GM12878 (cell line): ENCODE measurements at regions of chr12 and their contacts with region 1.

Region 1: DNA sequence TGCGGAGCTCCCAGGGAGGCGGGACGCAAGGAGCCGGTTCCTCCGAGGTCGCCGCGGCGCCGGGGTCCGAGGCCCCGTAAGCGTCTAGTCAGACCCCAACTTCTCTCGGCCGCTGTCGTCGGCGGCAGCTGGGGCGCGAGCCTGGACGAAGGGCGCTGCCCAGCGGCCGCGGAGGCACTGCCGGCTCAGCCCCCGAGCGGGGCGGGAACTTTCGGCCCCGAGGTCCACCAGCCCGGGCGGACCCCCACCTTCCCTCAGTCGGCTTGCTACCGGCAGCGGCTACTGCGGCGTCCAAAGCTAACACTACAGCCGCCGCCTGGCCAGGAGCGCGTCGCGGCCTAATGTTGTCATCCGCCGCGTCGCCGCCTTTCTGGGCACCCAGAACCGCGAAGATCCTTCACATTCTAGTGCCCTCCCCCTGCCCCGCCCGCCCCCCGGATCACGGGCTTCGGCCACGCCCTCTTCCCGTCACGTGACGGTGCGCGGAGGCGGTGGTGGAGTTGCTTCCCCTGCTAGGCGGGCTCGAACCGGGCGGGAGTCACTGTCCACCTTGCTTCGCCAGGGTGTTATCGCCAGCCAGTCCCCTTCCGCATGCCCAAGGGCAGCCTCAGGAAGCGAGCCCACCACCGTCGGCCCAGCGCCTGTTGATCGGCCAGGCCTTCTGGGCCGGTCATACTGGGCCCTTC is at the start of gene OSBPL8:
- DNase-seq: peak; percentile 71
- ATAC-seq: peak; percentile 85
- H3K4me3 ChIP-seq: peak within 1 kb of the TSS; percentile 98
- H3K27ac ChIP-seq: peak within 1 kb of the TSS; percentile 96
- H3K4me1 ChIP-seq: peaks cover 3% of the 10 kb centered on the region; the same call in 1 of the 2 replicates
- H3K27me3 ChIP-seq: no peaks in the 10 kb centered on the region
- CTCF ChIP-seq: peak; percentile 13 to 42 (median 13); a peak in 3 of 6 replicates
- EP300 ChIP-seq: 0 out of 4 replicates have a peak, but pooled peaks of 1 of the 2 experiments have one; percentile 25
- POLR2A ChIP-seq: peak; percentile 99
- RAD21 ChIP-seq: 0 out of 2 replicates have a peak, but pooled peaks have one; percentile 22
- polyA plus RNA-seq, gene OSBPL8: 10.4 to 13.7 TPM

Region 2: DNA sequence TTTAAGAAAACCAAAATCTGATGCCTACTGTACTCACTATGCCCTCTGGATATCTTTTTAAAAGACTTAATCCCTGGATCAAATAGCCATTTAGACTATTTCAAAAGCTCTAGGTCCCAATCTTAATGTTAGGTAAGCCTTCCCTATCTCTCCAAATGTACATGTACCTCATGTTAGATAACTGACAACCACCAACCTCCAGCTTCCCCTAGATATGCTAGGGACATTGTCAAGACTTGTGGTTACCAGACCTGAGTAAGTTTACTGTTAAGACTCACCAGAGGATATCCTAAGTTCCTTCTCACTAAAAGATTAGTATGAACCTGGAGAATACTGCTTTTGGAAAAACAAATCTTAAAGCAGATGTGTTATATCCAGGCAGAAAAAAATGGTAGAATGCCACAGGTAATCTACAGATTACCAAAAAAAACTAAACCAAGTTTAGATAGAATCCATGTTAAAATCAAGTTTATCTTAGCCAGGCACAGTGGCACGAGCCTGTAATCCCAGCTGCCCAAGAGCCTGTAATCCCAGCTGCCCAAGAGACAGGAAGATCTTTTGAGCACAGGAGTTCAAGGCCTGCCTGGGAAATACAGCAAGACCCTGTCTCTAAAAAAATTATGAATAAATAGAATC is 484.7 kb before region 1 on chr12:
- CTCF ChIA-PET with region 1: interaction called, 3 read pairs
- POLR2A ChIA-PET with region 1: no interaction called
- RAD21 ChIA-PET with region 1: no interaction called
- SMC1A ChIA-PET with region 1: no interaction called
- in situ Hi-C with region 1: loop called (anchors 5 kb)
- intact Hi-C with region 1: loop called (anchors 5 kb)
- DNase-seq: no peak
- ATAC-seq: peak; percentile 44
- H3K4me3 ChIP-seq: peak overlapping the region; percentile 13; the same call in 1 of the 2 replicates
- H3K27ac ChIP-seq: no peak overlapping the region
- H3K4me1 ChIP-seq: peaks cover 4% of the 10 kb centered on the region; the same call in 1 of the 2 replicates
- H3K27me3 ChIP-seq: no peaks in the 10 kb centered on the region
- CTCF ChIP-seq: no peak
- EP300 ChIP-seq: no peak
- POLR2A ChIP-seq: no peak
- RAD21 ChIP-seq: no peak

Region 3: GRCh38 chr12:76144245-76144549 is 415.3 kb before region 1 on chr12:
- CTCF ChIA-PET with region 1: no interaction called
- POLR2A ChIA-PET with region 1: no interaction called
- RAD21 ChIA-PET with region 1: no interaction called
- SMC1A ChIA-PET with region 1: no interaction called
- in situ Hi-C with region 1: no loop called
- intact Hi-C with region 1: no loop called
- DNase-seq: no peak
- ATAC-seq: peak; percentile 53
- H3K4me3 ChIP-seq: no peak overlapping the region
- H3K27ac ChIP-seq: no peak overlapping the region
- H3K4me1 ChIP-seq: peaks cover 20% of the 10 kb centered on the region
- H3K27me3 ChIP-seq: no peaks in the 10 kb centered on the region
- CTCF ChIP-seq: no peak
- EP300 ChIP-seq: no peak
- POLR2A ChIP-seq: no peak
- RAD21 ChIP-seq: no peak

Region 4: GRCh38 chr12:76348079-76348901 is 211.3 kb before region 1 on chr12 and contains the start of gene BBS10:
- CTCF ChIA-PET with region 1: interaction called, 5 read pairs
- POLR2A ChIA-PET with region 1: no interaction called
- RAD21 ChIA-PET with region 1: interaction called, 5 read pairs
- SMC1A ChIA-PET with region 1: interaction called, 5 read pairs
- in situ Hi-C with region 1: no loop called
- intact Hi-C with region 1: loop called (anchors 10 kb)
- DNase-seq: peak; percentile 70
- ATAC-seq: peak; percentile 99
- H3K4me3 ChIP-seq: peak within 1 kb of the TSS; percentile 84
- H3K27ac ChIP-seq: peak within 1 kb of the TSS; percentile 83
- H3K4me1 ChIP-seq: peaks cover 7% of the 10 kb centered on the region; the same call in 1 of the 2 replicates
- H3K27me3 ChIP-seq: no peaks in the 10 kb centered on the region
- CTCF ChIP-seq: peak in 2 of 3 experiments; percentile 22 to 39; a peak in 3 of 6 replicates
- EP300 ChIP-seq: no peak
- POLR2A ChIP-seq: peak; percentile 93
- RAD21 ChIP-seq: 0 out of 2 replicates have a peak, but pooled peaks have one; percentile 7
- polyA plus RNA-seq, gene BBS10: 1.2 to 1.5 TPM

Region 5: GRCh38 chr12:76470028-76470939 is 89.3 kb before region 1 on chr12:
- CTCF ChIA-PET with region 1: interaction called, 5 read pairs
- POLR2A ChIA-PET with region 1: interaction called, 3 read pairs
- RAD21 ChIA-PET with region 1: interaction called, 5 read pairs
- SMC1A ChIA-PET with region 1: interaction called, 4 read pairs
- in situ Hi-C with region 1: no loop called
- intact Hi-C with region 1: loop called (anchors 5 kb)
- DNase-seq: peak; percentile 25
- ATAC-seq: peak; percentile 96
- H3K4me3 ChIP-seq: no peak overlapping the region
- H3K27ac ChIP-seq: no peak overlapping the region
- H3K4me1 ChIP-seq: peaks cover 13% of the 10 kb centered on the region
- H3K27me3 ChIP-seq: no peaks in the 10 kb centered on the region
- CTCF ChIP-seq: no peak
- EP300 ChIP-seq: no peak
- POLR2A ChIP-seq: no peak
- RAD21 ChIP-seq: no peak

Region 6: DNA sequence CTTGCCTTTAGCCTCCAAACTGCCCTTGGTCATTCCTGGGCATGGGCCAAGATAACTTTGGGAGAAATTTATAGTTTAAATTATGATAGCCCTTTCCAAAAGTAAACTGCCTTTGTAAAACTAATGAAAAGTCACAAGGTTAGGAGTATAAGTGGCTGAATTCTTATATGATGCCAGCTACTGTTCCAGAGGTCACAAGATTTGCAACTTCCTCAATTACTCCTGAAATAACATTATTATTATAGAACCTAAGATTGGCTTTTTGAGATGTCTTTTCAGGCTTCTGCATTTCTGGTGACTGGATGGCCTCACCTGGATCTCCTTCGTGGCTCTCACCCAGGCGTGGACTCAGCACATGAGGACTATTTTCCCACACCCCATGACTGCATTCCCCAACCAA is 54.9 kb before region 1 on chr12:
- CTCF ChIA-PET with region 1: no interaction called
- POLR2A ChIA-PET with region 1: no interaction called
- RAD21 ChIA-PET with region 1: no interaction called
- SMC1A ChIA-PET with region 1: no interaction called
- in situ Hi-C with region 1: no loop called
- intact Hi-C with region 1: no loop called
- DNase-seq: no peak
- ATAC-seq: no peak
- H3K4me3 ChIP-seq: no peak overlapping the region
- H3K27ac ChIP-seq: no peak overlapping the region
- H3K4me1 ChIP-seq: no peaks in the 10 kb centered on the region
- H3K27me3 ChIP-seq: no peaks in the 10 kb centered on the region
- CTCF ChIP-seq: no peak
- EP300 ChIP-seq: no peak
- POLR2A ChIP-seq: no peak
- RAD21 ChIP-seq: no peak

Region 7: GRCh38 chr12:76529226-76529918 is 30.2 kb before region 1 on chr12:
- CTCF ChIA-PET with region 1: no interaction called
- POLR2A ChIA-PET with region 1: no interaction called
- RAD21 ChIA-PET with region 1: no interaction called
- SMC1A ChIA-PET with region 1: no interaction called
- in situ Hi-C with region 1: no loop called
- intact Hi-C with region 1: no loop called
- DNase-seq: no peak
- ATAC-seq: no peak; the same call in 2 of the 3 replicates
- H3K4me3 ChIP-seq: no peak overlapping the region
- H3K27ac ChIP-seq: no peak overlapping the region
- H3K4me1 ChIP-seq: no peaks in the 10 kb centered on the region
- H3K27me3 ChIP-seq: no peaks in the 10 kb centered on the region
- CTCF ChIP-seq: no peak
- EP300 ChIP-seq: no peak
- POLR2A ChIP-seq: no peak
- RAD21 ChIP-seq: no peak

Region 8: GRCh38 chr12:76763743-76764675 is 204.5 kb after region 1 on chr12 and contains the start of gene ZDHHC17:
- CTCF ChIA-PET with region 1: no interaction called
- POLR2A ChIA-PET with region 1: no interaction called
- RAD21 ChIA-PET with region 1: no interaction called
- SMC1A ChIA-PET with region 1: no interaction called
- in situ Hi-C with region 1: no loop called
- intact Hi-C with region 1: loop called (anchors 10 kb)
- DNase-seq: peak; percentile 66
- ATAC-seq: peak; percentile 93
- H3K4me3 ChIP-seq: peak within 1 kb of the TSS; percentile 85
- H3K27ac ChIP-seq: peak within 1 kb of the TSS; percentile 89
- H3K4me1 ChIP-seq: peaks cover 8% of the 10 kb centered on the region
- H3K27me3 ChIP-seq: no peaks in the 10 kb centered on the region
- CTCF ChIP-seq: no peak
- EP300 ChIP-seq: no peak
- POLR2A ChIP-seq: peak; percentile 98
- RAD21 ChIP-seq: no peak
- polyA plus RNA-seq, gene ZDHHC17: 4.3 to 4.9 TPM